PC-3 (cell line): ENCODE measurements at regions of chrX and their contacts with region 1.

Region 1: DNA sequence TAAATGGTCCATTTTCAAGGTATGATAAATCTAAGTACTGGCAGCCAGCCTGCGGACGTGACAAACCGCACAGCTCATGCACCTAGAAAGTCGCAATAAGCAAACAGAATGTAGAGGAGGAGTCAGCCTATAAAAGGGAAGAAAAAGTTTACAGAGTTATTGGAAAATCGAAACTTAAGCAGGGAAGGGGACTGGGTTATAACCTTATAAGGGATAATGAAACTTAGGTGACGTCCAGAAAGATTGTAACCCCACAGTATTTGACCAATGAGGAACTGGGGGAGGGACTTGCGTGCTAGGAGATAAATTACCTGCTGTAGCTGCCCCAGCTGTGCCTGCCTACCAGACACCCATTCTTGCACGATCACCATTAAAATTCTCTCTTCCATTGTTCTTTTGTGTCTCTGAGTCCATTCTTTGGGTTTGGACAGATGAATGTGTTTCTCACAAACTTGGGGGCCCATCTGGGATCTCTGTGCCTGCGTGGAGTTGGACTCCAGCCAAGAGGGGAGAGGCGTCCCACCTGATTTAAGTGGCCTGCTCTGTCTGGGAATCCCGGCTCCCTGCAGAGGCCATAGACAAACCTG is 61.0 kb downstream of the ZCCHC12 start:
- DNase-seq: peak; percentile 91
- ATAC-seq: peak; percentile 88
- H3K4me3 ChIP-seq: peak overlapping the region; percentile 83
- H3K27ac ChIP-seq: peak overlapping the region; percentile 95
- H3K4me1 ChIP-seq: peaks cover 24% of the 10 kb centered on the region
- H3K27me3 ChIP-seq: no peaks in the 10 kb centered on the region
- CTCF ChIP-seq: no peak

Region 2: DNA sequence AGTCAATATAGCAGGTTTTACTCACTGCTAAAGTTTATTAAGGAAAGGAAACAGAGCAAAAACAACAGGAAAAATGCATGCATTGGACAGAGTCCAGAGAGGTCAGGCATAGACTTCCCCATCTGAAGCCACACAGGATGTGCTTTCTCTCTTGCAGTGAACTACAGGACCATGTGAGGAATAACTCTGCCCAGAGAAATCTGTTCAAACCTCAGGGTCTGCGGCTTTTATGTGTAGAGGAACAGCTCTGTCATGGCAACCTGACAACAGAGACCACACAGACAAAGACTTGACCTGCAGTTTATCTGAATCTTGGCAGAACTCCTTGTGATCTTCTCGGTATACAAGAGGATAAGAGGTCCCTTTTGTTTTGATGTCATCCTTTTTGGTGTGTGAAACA is 43.5 kb after region 1 on chrX:
- CTCF ChIA-PET with region 1: no interaction called
- POLR2A ChIA-PET with region 1: no interaction called
- intact Hi-C with region 1: no loop called
- DNase-seq: peak; percentile 19
- ATAC-seq: peak; percentile 37; the same call in 1 of the 2 replicates
- H3K4me3 ChIP-seq: no peak overlapping the region
- H3K27ac ChIP-seq: no peak overlapping the region
- H3K4me1 ChIP-seq: no peaks in the 10 kb centered on the region
- H3K27me3 ChIP-seq: no peaks in the 10 kb centered on the region
- CTCF ChIP-seq: no peak

Region 3: GRCh38 chrX:118974088-118974907 is 89.7 kb after region 1 on chrX and contains the start of gene LONRF3:
- CTCF ChIA-PET with region 1: no interaction called
- POLR2A ChIA-PET with region 1: no interaction called
- intact Hi-C with region 1: loop called (anchors 10 kb)
- DNase-seq: peak; percentile 67
- ATAC-seq: peak; percentile 34
- H3K4me3 ChIP-seq: peak within 1 kb of the TSS; percentile 78
- H3K27ac ChIP-seq: peak within 1 kb of the TSS; percentile 56; the same call in 1 of the 2 replicates
- H3K4me1 ChIP-seq: peaks cover 25% of the 10 kb centered on the region
- H3K27me3 ChIP-seq: no peaks in the 10 kb centered on the region
- CTCF ChIP-seq: no peak
- total RNA-seq, gene LONRF3: 14.5 and 15.6 TPM in 2 replicates

Region 4: DNA sequence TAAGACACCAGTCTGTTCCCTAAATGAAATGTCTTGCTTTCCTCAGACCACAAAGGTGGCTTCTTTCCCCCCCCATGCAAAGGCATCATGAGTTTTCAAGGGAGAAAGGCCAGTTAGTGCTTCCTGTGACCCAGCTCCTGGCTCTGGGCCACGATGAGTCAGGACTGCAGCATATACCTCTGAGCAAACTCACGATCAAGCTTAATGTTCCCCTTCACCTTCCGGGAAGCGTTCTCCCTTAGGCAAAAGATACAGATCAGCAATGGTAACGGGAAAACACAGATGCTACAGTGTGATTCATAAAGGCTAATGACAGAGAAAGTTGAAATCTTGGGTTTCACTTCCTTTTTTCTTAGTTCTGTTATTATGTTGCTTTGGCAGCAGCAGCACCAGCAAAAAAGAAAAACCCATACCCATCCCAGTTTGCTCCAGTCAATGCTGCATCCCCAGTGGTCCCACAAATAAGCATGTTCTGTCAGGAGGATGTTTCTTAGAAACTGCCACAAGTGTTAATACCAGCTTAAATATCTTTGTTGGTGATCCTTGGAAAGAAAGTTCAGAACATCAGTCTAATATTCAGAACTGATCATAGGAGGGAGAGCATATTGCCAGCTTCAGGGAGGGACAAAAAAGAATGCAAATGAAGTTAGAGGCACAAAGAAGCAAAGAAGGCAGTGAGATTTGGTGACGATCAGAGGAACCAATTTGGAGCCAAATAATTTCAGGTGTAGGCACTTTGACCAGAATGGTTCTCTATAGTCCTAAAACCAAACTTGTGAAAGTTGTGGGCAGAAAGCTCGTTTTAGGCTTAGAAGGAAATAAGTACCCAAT is 131.0 kb after region 1 on chrX:
- CTCF ChIA-PET with region 1: no interaction called
- POLR2A ChIA-PET with region 1: no interaction called
- intact Hi-C with region 1: loop called (anchors 1 kb)
- DNase-seq: peak; percentile 98
- ATAC-seq: peak; percentile 88
- H3K4me3 ChIP-seq: no peak overlapping the region
- H3K27ac ChIP-seq: peak overlapping the region; percentile 100
- H3K4me1 ChIP-seq: peaks cover 41% of the 10 kb centered on the region
- H3K27me3 ChIP-seq: no peaks in the 10 kb centered on the region
- CTCF ChIP-seq: no peak

Region 5: GRCh38 chrX:119201570-119201969 is 316.9 kb after region 1 on chrX:
- CTCF ChIA-PET with region 1: no interaction called
- POLR2A ChIA-PET with region 1: no interaction called
- intact Hi-C with region 1: no loop called
- DNase-seq: peak; percentile 32
- ATAC-seq: peak; percentile 51; the same call in 1 of the 2 replicates
- H3K4me3 ChIP-seq: no peak overlapping the region
- H3K27ac ChIP-seq: no peak overlapping the region
- H3K4me1 ChIP-seq: peaks cover 5% of the 10 kb centered on the region; the same call in 1 of the 2 replicates
- H3K27me3 ChIP-seq: no peaks in the 10 kb centered on the region
- CTCF ChIP-seq: no peak